Calu3 (cell line): ENCODE measurements at regions of chr3 and their contacts with region 1.

Region 1: GRCh38 chr3:188270423-188270972 is 116.5 kb downstream of the LPP start:
- DNase-seq: peak; percentile 80
- H3K4me3 Mint-ChIP-seq: peak overlapping the region; percentile 24
- H3K27ac Mint-ChIP-seq: peak overlapping the region; percentile 88
- H3K4me1 Mint-ChIP-seq: peaks cover 55% of the 10 kb centered on the region
- H3K27me3 Mint-ChIP-seq: no peaks in the 10 kb centered on the region
- CTCF ChIP-seq: no peak

Region 2: GRCh38 chr3:188154014-188154808 is 116.3 kb before region 1 on chr3 and contains the start of gene LPP:
- CTCF ChIA-PET with region 1: interaction called, 6 read pairs
- intact Hi-C with region 1: loop called (anchors 2 kb)
- DNase-seq: peak; percentile 97
- H3K4me3 Mint-ChIP-seq: peak within 1 kb of the TSS; percentile 72
- H3K27ac Mint-ChIP-seq: peak within 1 kb of the TSS; percentile 86
- H3K4me1 Mint-ChIP-seq: peaks cover 56% of the 10 kb centered on the region
- H3K27me3 Mint-ChIP-seq: no peaks in the 10 kb centered on the region
- CTCF ChIP-seq: peak; percentile 21
- total RNA-seq, gene LPP: 219 and 264 TPM in 2 replicates

Region 3: DNA sequence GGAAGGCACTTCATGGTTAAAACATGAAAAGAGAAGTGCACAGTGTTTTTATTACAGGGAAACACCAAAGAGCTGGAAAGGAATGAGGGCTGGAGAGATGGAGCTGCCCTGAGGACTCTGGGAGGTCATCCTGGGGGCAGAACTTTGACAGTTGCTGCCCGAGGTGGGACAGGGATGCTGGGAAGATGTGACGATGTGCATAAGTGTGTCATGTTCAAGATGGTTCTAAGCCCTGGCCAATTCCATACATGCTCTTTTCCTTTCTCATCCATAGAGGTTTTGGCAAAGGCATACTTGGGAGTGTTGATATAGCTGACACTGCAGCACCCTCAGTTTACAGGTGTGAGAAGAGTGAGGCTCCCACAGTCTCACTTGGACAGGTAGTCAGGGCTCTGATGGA is 92.8 kb before region 1 on chr3:
- CTCF ChIA-PET with region 1: interaction called, 10 read pairs
- intact Hi-C with region 1: no loop called
- DNase-seq: no peak
- H3K4me3 Mint-ChIP-seq: no peak overlapping the region
- H3K27ac Mint-ChIP-seq: peak overlapping the region; percentile 1
- H3K4me1 Mint-ChIP-seq: peaks cover 65% of the 10 kb centered on the region
- H3K27me3 Mint-ChIP-seq: no peaks in the 10 kb centered on the region
- CTCF ChIP-seq: no peak

Region 4: DNA sequence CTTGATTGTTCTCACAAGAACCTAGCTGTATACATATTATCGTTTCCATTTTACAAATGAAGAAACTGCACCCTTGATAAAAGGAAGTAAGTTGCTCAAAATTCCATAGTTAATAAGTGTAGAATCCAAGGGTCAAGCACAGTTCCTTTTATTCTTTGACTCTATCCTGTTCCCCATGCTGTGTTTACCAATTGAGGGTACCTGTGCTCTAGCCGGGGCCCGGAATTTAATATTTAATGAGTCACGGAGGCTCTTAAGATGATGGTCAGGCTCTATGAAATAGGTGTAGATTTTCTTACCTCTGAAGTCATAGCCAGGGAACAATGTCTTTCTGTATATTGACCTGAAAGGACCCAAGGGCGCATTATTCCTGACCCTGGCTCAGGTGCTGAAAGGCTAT is 51.4 kb before region 1 on chr3:
- CTCF ChIA-PET with region 1: interaction called, 5 read pairs
- intact Hi-C with region 1: loop called (anchors 2 kb)
- DNase-seq: peak; percentile 80
- H3K4me3 Mint-ChIP-seq: no peak overlapping the region
- H3K27ac Mint-ChIP-seq: peak overlapping the region; percentile 62
- H3K4me1 Mint-ChIP-seq: peaks cover 88% of the 10 kb centered on the region
- H3K27me3 Mint-ChIP-seq: no peaks in the 10 kb centered on the region
- CTCF ChIP-seq: no peak

Region 5: DNA sequence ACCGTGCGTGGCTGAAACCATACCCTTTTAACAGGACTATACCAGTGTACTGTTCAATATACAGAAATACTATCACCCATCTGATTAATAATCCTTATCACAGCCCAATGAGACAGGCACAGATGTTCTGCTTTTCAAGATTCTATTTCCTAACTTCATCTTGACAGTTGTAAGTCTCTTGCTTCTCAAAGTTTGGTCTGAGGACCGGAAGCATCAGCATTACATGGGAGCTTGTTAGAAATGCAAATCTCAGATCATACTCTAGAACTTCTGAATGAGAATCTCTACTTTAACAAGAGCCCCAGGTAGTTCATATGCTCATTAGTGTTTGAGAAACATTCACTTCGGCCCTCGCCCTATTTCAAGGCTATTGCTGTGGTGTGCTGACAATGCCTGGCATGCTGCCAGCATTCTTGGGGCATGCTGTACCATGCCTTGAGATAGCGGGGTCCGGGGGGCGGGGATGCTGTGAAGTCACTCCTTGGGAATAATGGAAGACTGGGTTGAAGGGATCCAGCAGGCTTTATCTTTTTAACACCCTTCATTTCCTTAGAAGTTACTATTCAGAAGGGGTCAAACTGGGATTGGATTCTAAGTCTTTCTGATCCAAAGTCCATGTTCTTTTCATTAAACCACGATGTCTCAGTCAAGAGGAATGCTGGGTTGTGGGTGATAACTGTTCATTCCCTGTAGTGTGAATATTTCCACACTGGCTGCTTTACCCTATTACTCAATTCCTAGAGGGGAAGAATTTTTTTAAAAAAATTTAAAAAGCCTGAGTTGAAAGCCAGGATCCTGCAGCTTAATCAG is 78.1 kb after region 1 on chr3:
- CTCF ChIA-PET with region 1: no interaction called
- intact Hi-C with region 1: loop called (anchors 2 kb)
- DNase-seq: peak; percentile 88
- H3K4me3 Mint-ChIP-seq: peak overlapping the region; percentile 18
- H3K27ac Mint-ChIP-seq: peak overlapping the region; percentile 69
- H3K4me1 Mint-ChIP-seq: peaks cover 65% of the 10 kb centered on the region
- H3K27me3 Mint-ChIP-seq: no peaks in the 10 kb centered on the region
- CTCF ChIP-seq: no peak